ENCODE measurements at regions of chr2 and their contacts with region 1.

Region 1: DNA sequence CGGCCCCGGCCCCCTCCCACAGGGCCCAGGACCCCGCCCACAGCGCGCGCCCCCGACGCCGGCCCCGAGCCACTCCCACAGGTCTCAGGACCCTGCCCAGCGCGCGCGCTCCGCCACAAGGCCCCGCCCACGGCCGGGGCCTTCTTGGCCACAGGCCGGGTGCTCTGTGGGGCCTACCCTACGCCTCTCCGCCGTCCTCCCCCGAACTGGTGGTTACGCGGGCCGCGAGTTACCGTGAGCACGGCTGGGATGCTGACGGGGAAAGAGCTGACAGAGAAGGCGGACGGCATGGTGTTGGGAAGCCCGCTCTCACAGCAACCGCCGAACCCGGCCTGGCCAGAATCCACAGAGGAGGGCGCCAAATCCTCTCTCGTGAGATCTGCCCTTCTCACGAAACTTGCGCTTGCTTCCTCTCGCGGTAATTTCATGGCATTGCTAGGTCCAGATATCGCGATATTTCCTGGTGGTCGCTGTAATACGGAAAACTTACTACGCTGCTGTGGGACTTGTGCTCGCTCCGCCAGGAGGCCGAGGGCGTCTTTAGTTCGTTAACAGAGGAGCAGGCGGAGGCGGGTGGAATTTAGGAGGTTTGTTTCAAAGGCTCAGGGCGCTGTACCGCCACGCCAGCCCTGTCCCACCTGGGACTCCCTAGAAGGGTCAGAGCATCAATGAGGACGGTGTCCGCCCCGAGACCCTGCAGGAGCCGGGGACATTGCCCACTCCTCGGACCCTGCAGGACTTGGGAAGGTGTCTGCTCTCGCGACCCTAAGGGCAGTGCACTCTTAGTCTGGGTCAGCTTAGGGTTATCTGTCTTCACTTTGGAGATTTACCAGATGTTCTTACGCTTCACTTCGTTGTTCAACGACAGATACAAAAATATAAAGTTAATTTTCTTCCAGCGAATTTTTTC is at the start of gene TMEM18:
- DNase-seq: peak; percentile 95 to 97
- H3K4me3 ChIP-seq: peak within 1 kb of the TSS; percentile 79 to 84
- H3K27ac ChIP-seq: peak within 1 kb of the TSS; percentile 95 to 98
- H3K4me1 ChIP-seq: peaks cover 0 to 33% (median 14%) of the 10 kb centered on the region in 4 donors
- H3K27me3 ChIP-seq: no peaks in the 10 kb centered on the region
- CTCF ChIP-seq: peak; percentile 16 to 28

Region 2: GRCh38 chr2:692767-693166 is 15.5 kb after region 1 on chr2:
- intact Hi-C with region 1: loop called (anchors 2 kb)
- DNase-seq: no peak
- H3K4me3 ChIP-seq: peak overlapping the region; percentile 47 to 50
- H3K27ac ChIP-seq: peak overlapping the region; percentile 82 to 91
- H3K4me1 ChIP-seq: peaks cover 0 to 81% (median 40%) of the 10 kb centered on the region in 4 donors
- H3K27me3 ChIP-seq: no peaks in the 10 kb centered on the region
- CTCF ChIP-seq: no peak

Region 3: GRCh38 chr2:741195-741496 is 63.8 kb after region 1 on chr2:
- intact Hi-C with region 1: loop called (anchors 5 kb)
- DNase-seq: no peak
- H3K4me3 ChIP-seq: peak overlapping the region in 1 of 2 donors; percentile 48
- H3K27ac ChIP-seq: no peak overlapping the region
- H3K4me1 ChIP-seq: peaks cover 0 to 18% (median 10%) of the 10 kb centered on the region in 4 donors
- H3K27me3 ChIP-seq: peaks cover 0 to 4% of the 10 kb centered on the region in 2 donors
- CTCF ChIP-seq: no peak

Region 4: DNA sequence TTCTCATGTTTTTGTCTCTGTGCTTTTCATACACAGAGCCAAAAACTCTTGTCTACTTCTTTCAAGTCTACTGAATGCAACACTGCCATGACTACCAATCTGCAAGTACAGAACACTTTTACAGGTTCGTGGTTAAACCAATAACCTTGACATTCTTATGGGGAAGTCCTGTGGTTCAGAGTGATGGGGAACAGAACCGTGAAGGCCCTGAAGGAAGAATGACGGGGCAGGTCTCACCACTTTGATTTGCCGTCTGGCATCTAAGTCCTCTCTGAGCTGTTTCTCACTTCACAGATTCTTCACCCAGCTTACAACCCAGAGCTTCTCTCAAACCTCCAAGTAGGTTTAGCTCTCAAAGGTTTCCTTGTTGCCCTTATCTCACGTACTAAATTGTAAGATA is 155.9 kb after region 1 on chr2:
- intact Hi-C with region 1: no loop called
- DNase-seq: no peak
- H3K4me3 ChIP-seq: no peak overlapping the region
- H3K27ac ChIP-seq: no peak overlapping the region
- H3K4me1 ChIP-seq: peaks cover 0 to 23% (median 13%) of the 10 kb centered on the region in 4 donors
- H3K27me3 ChIP-seq: peaks cover 0 to 5% of the 10 kb centered on the region in 2 donors
- CTCF ChIP-seq: no peak

Region 5: GRCh38 chr2:1600191-1601082 is 923.1 kb after region 1 on chr2:
- intact Hi-C with region 1: no loop called
- DNase-seq: peak in 1 of 2 donors; percentile 58
- H3K4me3 ChIP-seq: no peak overlapping the region
- H3K27ac ChIP-seq: no peak overlapping the region
- H3K4me1 ChIP-seq: peaks cover 0 to 7% (median 2%) of the 10 kb centered on the region in 4 donors
- H3K27me3 ChIP-seq: peaks cover 0 to 6% of the 10 kb centered on the region in 2 donors
- CTCF ChIP-seq: no peak

Measured in tibial artery (tissue), 4 donors.